Colonic mucosa (tissue), 4 donors: ENCODE measurements at regions of chr15 and their contacts with region 1.

Region 1: DNA sequence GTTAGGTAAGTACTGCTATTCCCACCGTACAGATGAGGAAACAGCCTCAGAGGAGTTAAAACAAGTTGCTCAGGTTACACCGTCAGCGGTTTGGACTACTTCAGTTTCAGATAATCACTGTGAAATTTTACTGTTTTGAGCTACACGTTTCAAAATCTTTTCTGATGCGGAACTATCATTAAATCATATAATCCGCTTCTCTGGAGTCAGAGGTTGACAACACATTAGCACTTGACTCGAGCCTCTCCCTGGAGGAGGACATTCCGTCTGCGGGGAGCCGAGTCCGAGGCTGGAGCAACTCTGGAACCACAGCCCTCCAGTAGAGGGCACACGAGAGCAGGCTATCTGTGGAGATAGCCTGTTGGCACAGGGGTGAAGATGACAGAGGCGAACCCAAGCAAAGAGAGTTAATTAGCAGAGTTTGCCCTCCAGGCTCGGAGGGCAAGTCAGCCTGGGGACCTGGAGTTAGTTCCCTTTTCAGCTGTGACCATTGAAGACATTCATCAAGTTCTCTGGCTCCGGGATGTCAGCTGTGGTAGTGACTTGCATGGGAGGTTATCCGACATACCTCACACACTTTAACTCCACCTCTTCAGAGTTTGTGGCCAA is 131.2 kb downstream of the IGF1R start:
- DNase-seq: peak; percentile 91
- H3K4me3 ChIP-seq: no peak overlapping the region
- H3K27ac ChIP-seq: no peak overlapping the region
- H3K4me1 ChIP-seq: peaks cover 3% of the 10 kb centered on the region
- H3K27me3 ChIP-seq: no peaks in the 10 kb centered on the region
- CTCF ChIP-seq: peak; percentile 93

Region 2: DNA sequence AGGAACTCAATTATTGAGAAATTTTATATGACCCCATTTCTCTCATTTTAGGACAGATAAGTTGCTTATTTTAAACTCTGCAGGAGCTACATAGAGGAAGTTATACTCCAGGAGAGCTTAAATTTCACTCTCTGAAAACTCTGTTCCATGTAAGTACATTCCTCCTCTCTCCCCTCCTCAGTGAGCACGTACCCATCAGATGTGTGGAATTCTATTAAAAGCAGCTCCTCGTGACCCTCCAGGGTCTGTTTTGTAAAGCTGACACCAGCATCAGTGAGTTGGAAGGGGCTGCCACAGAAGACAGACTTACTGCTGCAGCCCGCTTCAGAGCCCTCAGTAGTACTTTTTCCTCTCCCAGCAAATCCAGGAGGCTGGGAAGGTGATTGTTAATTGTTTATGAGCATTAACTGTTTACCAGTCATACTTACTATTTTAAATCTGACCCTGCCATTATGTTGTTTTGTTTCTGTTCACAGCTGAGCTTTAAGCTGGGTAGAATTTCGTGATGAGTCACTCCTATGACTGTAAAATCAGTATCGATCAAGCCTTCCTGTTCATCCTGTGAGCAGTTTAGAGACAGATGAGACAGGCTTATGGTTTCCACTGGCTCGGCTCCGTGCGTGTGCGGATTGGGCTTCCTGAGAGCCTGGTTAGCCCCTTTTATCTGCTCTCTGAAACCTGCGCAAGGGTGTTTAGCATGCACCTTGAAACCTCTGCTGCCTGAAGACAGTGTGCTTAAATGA is 110.8 kb before region 1 on chr15:
- intact Hi-C with region 1: loop called (anchors 10 kb)
- DNase-seq: no peak
- H3K4me3 ChIP-seq: no peak overlapping the region
- H3K27ac ChIP-seq: no peak overlapping the region
- H3K4me1 ChIP-seq: no peaks in the 10 kb centered on the region
- H3K27me3 ChIP-seq: no peaks in the 10 kb centered on the region
- CTCF ChIP-seq: no peak

Region 3: GRCh38 chr15:98906712-98907083 is 127.1 kb after region 1 on chr15:
- intact Hi-C with region 1: loop called (anchors 5 kb)
- DNase-seq: no peak
- H3K4me3 ChIP-seq: no peak overlapping the region
- H3K27ac ChIP-seq: no peak overlapping the region
- H3K4me1 ChIP-seq: no peaks in the 10 kb centered on the region
- H3K27me3 ChIP-seq: no peaks in the 10 kb centered on the region
- CTCF ChIP-seq: no peak

Region 4: DNA sequence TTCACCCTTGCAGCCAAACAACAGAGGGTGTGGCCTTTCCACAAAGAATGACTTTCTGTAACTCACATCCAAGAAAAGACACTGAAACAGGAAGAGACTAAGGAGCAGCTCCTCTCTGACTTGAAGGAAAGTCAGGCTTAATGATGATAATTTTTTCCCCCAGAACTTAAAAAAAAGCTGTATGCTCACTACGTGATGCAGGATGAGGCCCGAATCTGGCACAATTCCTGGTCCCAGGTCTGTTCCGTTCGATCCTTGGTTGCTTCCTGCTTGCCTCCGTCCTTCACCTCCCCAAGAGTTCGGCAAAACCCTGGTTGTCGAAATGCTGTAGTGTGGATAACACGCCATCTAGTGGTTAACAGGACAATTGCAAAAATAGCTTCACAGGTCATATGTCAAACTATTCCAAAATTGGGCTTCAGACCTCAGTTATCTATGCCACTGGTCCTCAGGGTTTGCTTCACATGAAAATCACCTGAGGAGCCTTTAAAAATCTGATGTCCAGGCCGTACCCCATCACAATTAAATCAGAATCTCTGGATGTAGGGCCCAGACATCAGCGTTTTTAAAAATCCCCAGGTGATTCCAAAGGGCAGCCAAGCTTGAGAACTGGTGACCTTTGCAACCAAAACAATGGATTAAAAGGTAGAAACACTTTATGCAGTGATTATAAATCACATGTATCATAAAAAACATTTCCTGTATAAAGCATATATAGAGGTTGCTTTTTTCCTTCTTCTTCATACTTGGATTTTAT is 297.2 kb after region 1 on chr15:
- intact Hi-C with region 1: loop called (anchors 10 kb)
- DNase-seq: peak; percentile 55
- H3K4me3 ChIP-seq: no peak overlapping the region
- H3K27ac ChIP-seq: no peak overlapping the region
- H3K4me1 ChIP-seq: no peaks in the 10 kb centered on the region
- H3K27me3 ChIP-seq: no peaks in the 10 kb centered on the region
- CTCF ChIP-seq: peak; percentile 86